ENCODE measurements at regions of chr15 and their contacts with region 1.

Region 1: DNA sequence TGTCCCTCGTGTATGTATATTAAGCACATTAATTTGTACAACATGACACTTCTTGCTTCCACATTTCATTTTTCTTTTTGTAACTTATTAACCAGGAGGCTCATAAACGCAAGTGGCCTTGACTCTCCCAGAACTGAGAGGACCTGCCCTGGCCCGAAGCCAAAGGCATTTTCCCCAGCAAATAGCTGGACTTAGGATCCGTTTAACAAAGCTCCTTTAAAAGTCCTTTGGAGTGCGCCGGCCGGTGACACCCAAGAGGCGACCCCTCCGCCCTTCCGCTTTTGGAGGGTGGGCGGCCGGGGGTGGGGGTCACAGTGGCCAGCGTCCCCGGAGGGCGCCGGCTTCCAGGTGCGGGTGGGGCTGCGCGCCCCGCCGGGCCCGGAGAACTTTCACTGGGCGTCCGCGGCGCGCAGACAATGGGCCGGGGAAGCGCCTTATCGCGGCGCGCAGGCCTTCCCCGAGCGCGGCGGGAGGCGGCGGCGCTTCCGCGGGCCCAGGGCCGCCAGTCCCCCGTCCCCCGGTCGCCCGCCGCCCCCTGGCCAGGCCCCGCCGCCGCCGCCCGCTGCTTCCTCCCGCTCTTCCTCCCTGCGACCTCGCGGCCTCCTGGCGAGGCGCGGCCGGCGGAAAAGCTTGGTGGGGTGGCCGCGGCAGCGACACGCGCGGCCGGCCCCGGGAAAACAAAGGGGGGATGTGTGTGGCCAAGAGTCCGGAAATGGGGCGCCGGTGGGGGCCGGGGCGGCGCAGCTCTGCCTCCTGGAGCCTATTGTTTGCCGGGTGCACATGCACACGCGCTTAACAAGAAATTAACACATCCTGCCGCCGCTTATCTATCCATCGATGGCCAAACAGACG is 613.4 kb downstream of the MCTP2 start:
- DNase-seq: peak; percentile 88
- H3K4me3 ChIP-seq: peak overlapping the region in 2 of 8 donors; percentile 27 to 43
- H3K27ac ChIP-seq: peak overlapping the region; percentile 69 to 87 (median 81)
- H3K4me1 ChIP-seq: peaks cover 0 to 24% (median 12%) of the 10 kb centered on the region in 6 donors
- H3K27me3 ChIP-seq: peaks cover 0 to 40% (median 0%) of the 10 kb centered on the region in 7 donors
- CTCF ChIP-seq: peak in 4 of 11 experiments; percentile 6 to 21 (median 18)
- POLR2A ChIP-seq: no peak

Region 2: GRCh38 chr15:94670438-94671034 is 174.2 kb before region 1 on chr15:
- intact Hi-C with region 1: loop called (anchors 10 kb)
- DNase-seq: no peak
- H3K4me3 ChIP-seq: no peak overlapping the region
- H3K27ac ChIP-seq: peak overlapping the region; percentile 51 to 84 (median 79)
- H3K4me1 ChIP-seq: peaks cover 0 to 29% (median 8%) of the 10 kb centered on the region in 6 donors
- H3K27me3 ChIP-seq: no peaks in the 10 kb centered on the region
- CTCF ChIP-seq: peak; percentile 49 to 84 (median 69)
- POLR2A ChIP-seq: no peak

Region 3: DNA sequence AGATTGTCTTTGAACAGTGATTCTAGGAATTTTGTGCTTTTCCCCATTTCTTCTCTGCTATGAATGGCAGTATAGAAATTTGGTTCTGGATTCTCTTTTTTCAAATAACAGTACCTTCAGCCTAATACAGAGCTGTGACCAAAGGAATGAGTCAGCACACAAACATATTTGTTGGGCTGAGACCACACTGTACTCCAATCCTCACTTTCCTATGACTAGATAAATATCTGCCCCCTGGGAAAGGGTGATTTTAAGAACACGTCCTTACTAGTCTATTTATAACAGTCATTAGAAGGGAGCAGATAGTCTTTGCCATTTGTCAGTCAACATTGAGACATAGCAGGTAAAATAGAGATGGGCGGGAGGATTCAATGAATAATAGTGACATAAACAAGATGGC is 152.1 kb before region 1 on chr15:
- intact Hi-C with region 1: no loop called
- DNase-seq: no peak
- H3K4me3 ChIP-seq: no peak overlapping the region
- H3K27ac ChIP-seq: no peak overlapping the region
- H3K4me1 ChIP-seq: no peaks in the 10 kb centered on the region
- H3K27me3 ChIP-seq: no peaks in the 10 kb centered on the region
- CTCF ChIP-seq: no peak
- POLR2A ChIP-seq: no peak

Region 4: GRCh38 chr15:95226850-95227634 is 382.3 kb after region 1 on chr15:
- intact Hi-C with region 1: no loop called
- DNase-seq: no peak
- H3K4me3 ChIP-seq: no peak overlapping the region
- H3K27ac ChIP-seq: no peak overlapping the region
- H3K4me1 ChIP-seq: no peaks in the 10 kb centered on the region
- H3K27me3 ChIP-seq: no peaks in the 10 kb centered on the region
- CTCF ChIP-seq: no peak
- POLR2A ChIP-seq: no peak